MCF 10A (cell line): ENCODE measurements at regions of chr4 and their contacts with region 1.

Region 1: DNA sequence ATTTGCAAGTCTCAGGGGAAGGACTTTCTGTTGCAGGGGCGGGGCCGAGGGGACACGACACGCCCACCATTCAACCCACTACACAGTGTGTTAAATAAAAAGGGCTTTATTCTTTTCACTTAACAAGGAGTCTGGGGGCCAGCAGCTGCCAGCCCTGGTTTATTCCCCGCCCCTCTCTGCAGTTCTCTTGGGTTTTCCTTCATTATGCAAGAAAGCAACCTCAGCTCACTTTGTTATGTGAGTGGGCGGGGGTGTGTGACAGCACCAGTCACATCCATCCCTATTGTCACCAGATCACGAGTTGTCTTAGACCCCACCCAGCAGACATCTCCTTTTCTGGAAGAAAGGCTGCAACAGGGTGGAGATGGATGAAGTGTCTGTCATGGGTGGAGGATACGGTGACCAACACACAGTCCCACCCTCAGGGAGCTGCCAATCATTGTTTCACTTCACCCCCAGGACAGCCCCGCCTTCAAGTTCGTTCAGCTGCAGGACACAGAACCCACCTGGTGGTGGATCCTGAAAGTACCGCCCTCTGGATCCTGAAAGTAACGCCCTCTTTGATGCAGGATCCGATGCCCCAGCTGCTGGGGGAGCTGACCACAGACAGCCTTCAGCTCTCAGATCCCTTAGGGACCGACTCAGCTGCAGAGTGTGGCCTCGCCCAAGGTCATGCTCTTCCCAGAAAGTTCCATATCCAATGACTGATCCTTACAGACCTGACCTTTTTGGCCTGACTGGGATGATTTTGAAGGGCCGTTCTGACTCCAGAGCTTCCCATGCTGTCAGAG is 79.6 kb downstream of the SMIM20 start:
- DNase-seq: peak; percentile 17
- H3K4me3 Mint-ChIP-seq: no peak overlapping the region
- H3K27ac Mint-ChIP-seq: no peak overlapping the region
- H3K4me1 Mint-ChIP-seq: peaks cover 7% of the 10 kb centered on the region
- H3K27me3 Mint-ChIP-seq: no peaks in the 10 kb centered on the region
- CTCF ChIP-seq: peak; percentile 14

Region 2: DNA sequence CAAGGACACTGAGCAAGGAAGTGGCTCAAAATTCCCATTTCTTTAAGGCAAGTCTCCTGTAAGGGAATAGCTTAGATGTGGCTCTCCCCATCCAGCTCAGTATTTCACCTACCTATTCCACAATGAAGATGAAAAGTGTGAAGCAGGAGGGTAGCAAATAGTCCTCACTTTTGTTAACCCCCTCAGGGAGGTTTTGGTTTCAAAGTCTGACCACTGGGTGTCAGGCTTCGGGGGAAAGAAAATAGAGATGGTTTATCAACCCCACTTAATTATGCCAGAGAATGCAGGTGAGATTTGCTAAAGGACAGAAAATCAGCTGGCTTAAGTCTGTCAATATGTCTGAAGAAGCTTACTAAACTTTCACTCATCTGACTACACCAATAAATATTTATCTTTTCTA is 1478.8 kb before region 1 on chr4:
- CTCF ChIA-PET with region 1: no interaction called
- POLR2A ChIA-PET with region 1: no interaction called
- intact Hi-C with region 1: no loop called
- DNase-seq: no peak
- H3K4me3 Mint-ChIP-seq: no peak overlapping the region
- H3K27ac Mint-ChIP-seq: no peak overlapping the region
- H3K4me1 Mint-ChIP-seq: peaks cover 2% of the 10 kb centered on the region
- H3K27me3 Mint-ChIP-seq: no peaks in the 10 kb centered on the region
- CTCF ChIP-seq: no peak

Region 3: GRCh38 chr4:26010304-26010703 is 16.7 kb after region 1 on chr4:
- CTCF ChIA-PET with region 1: interaction called, 15 read pairs
- POLR2A ChIA-PET with region 1: no interaction called
- intact Hi-C with region 1: no loop called
- DNase-seq: no peak
- H3K4me3 Mint-ChIP-seq: no peak overlapping the region
- H3K27ac Mint-ChIP-seq: no peak overlapping the region
- H3K4me1 Mint-ChIP-seq: no peaks in the 10 kb centered on the region
- H3K27me3 Mint-ChIP-seq: peaks cover 36% of the 10 kb centered on the region
- CTCF ChIP-seq: no peak

Region 4: GRCh38 chr4:26061248-26061986 is 67.8 kb after region 1 on chr4:
- CTCF ChIA-PET with region 1: interaction called, 33 read pairs
- POLR2A ChIA-PET with region 1: no interaction called
- intact Hi-C with region 1: loop called (anchors 1 kb)
- DNase-seq: peak; percentile 78
- H3K4me3 Mint-ChIP-seq: no peak overlapping the region
- H3K27ac Mint-ChIP-seq: no peak overlapping the region
- H3K4me1 Mint-ChIP-seq: peaks cover 7% of the 10 kb centered on the region
- H3K27me3 Mint-ChIP-seq: no peaks in the 10 kb centered on the region
- CTCF ChIP-seq: peak; percentile 61

Region 5: GRCh38 chr4:26325191-26325590 is 331.6 kb after region 1 on chr4:
- CTCF ChIA-PET with region 1: interaction called, 95 read pairs
- POLR2A ChIA-PET with region 1: interaction called, 5 read pairs
- intact Hi-C with region 1: loop called (anchors 1 kb)
- DNase-seq: peak; percentile 64
- H3K4me3 Mint-ChIP-seq: no peak overlapping the region
- H3K27ac Mint-ChIP-seq: no peak overlapping the region
- H3K4me1 Mint-ChIP-seq: peaks cover 29% of the 10 kb centered on the region
- H3K27me3 Mint-ChIP-seq: no peaks in the 10 kb centered on the region
- CTCF ChIP-seq: peak; percentile 31

Region 6: GRCh38 chr4:27010334-27010940 is 1016.8 kb after region 1 on chr4:
- CTCF ChIA-PET with region 1: interaction called, 4 read pairs
- POLR2A ChIA-PET with region 1: no interaction called
- intact Hi-C with region 1: loop called (anchors 2 kb)
- DNase-seq: peak; percentile 59
- H3K4me3 Mint-ChIP-seq: no peak overlapping the region
- H3K27ac Mint-ChIP-seq: peak overlapping the region; percentile 39
- H3K4me1 Mint-ChIP-seq: no peaks in the 10 kb centered on the region
- H3K27me3 Mint-ChIP-seq: no peaks in the 10 kb centered on the region
- CTCF ChIP-seq: peak; percentile 71